HEK293T (cell line): ENCODE measurements at regions of chr1 and their contacts with region 1.

Region 1: DNA sequence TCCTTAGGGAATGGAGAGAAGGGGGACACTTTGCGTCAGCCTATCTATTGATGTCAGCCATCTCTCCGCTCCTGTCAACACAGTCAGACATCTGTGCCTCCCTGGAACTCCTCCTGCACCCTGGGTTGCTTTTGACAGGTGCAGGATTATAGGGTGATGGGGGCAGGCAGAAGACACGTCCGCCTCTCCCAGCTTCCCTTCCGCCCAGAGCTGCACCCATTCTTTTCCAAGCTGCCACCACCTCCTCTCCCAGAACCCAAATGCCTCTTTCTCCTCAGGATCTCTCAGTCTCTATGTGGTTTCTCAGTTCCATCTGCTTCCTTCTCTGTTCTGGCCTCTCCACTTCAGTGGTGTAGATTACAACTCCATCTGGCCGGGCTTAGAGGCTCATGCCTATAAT is 17.1 kb upstream of the KIF1B start:
- DNase-seq: no peak

Region 2: GRCh38 chr1:10209905-10210810 is 16.9 kb after region 1 on chr1 and contains the start of gene KIF1B:
- CTCF ChIA-PET with region 1: interaction called, 15 read pairs
- POLR2A ChIA-PET with region 1: interaction called, 5 read pairs
- DNase-seq: peak; percentile 100

Region 3: GRCh38 chr1:10299151-10299550 is 105.9 kb after region 1 on chr1:
- CTCF ChIA-PET with region 1: no interaction called
- POLR2A ChIA-PET with region 1: no interaction called
- DNase-seq: no peak